ENCODE measurements at regions of chrX and their contacts with region 1.

Region 1: GRCh38 chrX:39730662-39731397 is 366.9 kb downstream of the BCOR start:
- DNase-seq: peak; percentile 70
- H3K4me3 Mint-ChIP-seq: no peak overlapping the region
- H3K27ac Mint-ChIP-seq: no peak overlapping the region
- H3K4me1 Mint-ChIP-seq: peaks cover 20% of the 10 kb centered on the region
- H3K27me3 Mint-ChIP-seq: peaks cover 25% of the 10 kb centered on the region
- CTCF ChIP-seq: peak; percentile 45

Region 2: GRCh38 chrX:39791691-39792090 is 60.9 kb after region 1 on chrX:
- CTCF ChIA-PET with region 1: no interaction called
- POLR2A ChIA-PET with region 1: no interaction called
- intact Hi-C with region 1: no loop called
- DNase-seq: no peak
- H3K4me3 Mint-ChIP-seq: no peak overlapping the region
- H3K27ac Mint-ChIP-seq: no peak overlapping the region
- H3K4me1 Mint-ChIP-seq: no peaks in the 10 kb centered on the region
- H3K27me3 Mint-ChIP-seq: peaks cover 45% of the 10 kb centered on the region
- CTCF ChIP-seq: no peak

Region 3: GRCh38 chrX:39814391-39814790 is 83.6 kb after region 1 on chrX:
- CTCF ChIA-PET with region 1: interaction called, 4 read pairs
- POLR2A ChIA-PET with region 1: interaction called, 4 read pairs
- intact Hi-C with region 1: loop called (anchors 1 kb)
- DNase-seq: peak; percentile 51
- H3K4me3 Mint-ChIP-seq: no peak overlapping the region
- H3K27ac Mint-ChIP-seq: peak overlapping the region; percentile 4
- H3K4me1 Mint-ChIP-seq: peaks cover 15% of the 10 kb centered on the region
- H3K27me3 Mint-ChIP-seq: peaks cover 58% of the 10 kb centered on the region
- CTCF ChIP-seq: peak; percentile 45

Region 4: GRCh38 chrX:39907964-39908616 is 177.3 kb after region 1 on chrX:
- CTCF ChIA-PET with region 1: interaction called, 4 read pairs
- POLR2A ChIA-PET with region 1: no interaction called
- intact Hi-C with region 1: loop called (anchors 10 kb)
- DNase-seq: peak; percentile 90
- H3K4me3 Mint-ChIP-seq: peak overlapping the region; percentile 60
- H3K27ac Mint-ChIP-seq: peak overlapping the region; percentile 10
- H3K4me1 Mint-ChIP-seq: peaks cover 26% of the 10 kb centered on the region
- H3K27me3 Mint-ChIP-seq: peaks cover 57% of the 10 kb centered on the region
- CTCF ChIP-seq: no peak

Region 5: DNA sequence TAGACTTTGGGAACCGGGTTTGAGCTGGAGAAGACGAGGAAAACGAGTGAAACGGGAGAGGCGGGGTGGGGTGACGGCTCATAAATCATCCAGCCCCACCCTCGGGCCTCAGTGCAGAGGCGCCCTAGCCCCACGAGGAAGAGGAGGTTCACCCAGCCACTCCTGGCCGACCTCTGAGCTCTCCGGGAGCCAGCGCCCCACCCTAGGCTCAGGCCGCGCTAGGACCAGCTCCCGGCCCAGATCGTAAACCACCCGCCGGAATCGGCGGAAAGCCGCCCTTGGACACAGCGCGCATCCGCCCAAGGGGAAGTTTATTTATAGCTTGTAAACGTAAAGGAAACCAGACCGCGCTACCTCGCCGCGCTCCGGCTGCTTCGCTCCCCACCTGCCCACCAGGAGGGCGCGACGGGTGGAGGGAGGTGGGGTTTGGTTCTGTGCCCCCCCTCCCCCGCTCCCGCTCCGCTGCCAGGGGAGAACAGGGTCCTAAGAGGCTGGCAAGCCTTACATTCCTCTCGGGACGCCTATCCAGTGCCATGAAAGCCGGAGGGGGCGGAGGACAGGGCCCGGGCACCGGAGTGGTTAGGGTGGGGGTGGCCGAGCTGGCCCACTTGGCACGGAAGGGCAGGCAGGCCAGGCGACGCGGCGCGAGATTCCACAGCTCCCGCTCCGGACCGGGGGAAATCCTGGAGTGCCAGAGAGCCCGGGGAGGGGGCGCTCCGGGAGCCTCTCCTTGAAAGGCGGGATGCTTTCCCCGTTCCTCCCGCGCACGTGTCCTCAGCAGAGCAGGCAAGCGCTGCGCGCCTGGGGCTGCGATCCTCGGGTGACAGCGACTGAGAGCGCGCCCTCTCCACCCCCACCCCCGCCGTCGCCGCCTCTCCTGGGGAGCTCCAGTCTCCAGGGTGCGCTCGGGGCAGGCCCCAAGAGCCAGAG is 282.7 kb after region 1 on chrX:
- CTCF ChIA-PET with region 1: no interaction called
- POLR2A ChIA-PET with region 1: no interaction called
- intact Hi-C with region 1: loop called (anchors 10 kb)
- DNase-seq: peak; percentile 74
- H3K4me3 Mint-ChIP-seq: peak overlapping the region; percentile 79
- H3K27ac Mint-ChIP-seq: peak overlapping the region; percentile 82
- H3K4me1 Mint-ChIP-seq: peaks cover 6% of the 10 kb centered on the region
- H3K27me3 Mint-ChIP-seq: no peaks in the 10 kb centered on the region
- CTCF ChIP-seq: no peak

Region 6: DNA sequence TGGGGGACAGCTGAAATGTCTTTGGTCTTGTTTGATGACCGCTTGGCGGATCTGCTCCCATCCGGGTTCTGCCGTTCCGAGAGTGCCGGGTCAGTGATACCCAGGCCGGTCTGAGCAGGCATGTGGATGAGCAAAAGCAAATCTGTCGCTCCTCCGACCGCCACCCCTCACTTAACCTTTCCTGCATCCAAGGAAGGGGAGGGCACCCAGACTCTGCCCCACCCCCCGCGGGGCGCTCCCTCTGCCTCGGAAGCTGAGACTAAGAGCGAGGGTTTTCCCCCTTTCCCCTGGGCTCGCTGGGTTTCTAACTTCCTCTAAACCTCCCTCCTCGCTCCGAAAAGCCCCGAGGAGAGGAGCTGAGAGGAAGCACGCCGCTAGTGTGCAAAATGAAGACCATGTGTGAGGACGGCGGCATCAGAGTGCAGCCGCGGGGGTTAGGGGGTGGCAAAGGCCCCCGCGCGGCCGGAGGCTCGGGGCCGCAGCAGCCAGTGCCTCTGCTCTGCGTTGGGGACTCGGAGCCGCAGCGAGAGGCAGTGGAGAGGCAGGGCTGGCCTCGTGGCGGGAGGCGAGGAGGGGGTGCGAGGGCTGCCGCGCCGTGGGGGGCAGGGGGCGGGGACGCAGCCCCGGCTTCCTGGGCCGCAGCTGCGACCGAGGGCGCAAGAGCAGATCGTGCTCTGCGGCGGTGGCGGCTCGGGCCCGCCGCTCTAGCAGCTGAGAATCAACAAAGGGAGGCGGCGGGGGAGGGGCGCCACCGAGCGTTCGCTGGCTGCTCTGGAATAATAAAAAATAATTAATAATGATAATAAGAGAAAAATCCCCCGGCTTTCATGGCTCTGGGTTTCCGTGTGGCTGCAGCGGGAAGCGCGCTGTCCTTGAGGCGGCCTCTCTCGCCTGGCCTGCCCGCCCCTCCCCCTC is 422.8 kb after region 1 on chrX:
- CTCF ChIA-PET with region 1: no interaction called
- POLR2A ChIA-PET with region 1: no interaction called
- intact Hi-C with region 1: loop called (anchors 2 kb)
- DNase-seq: peak; percentile 49
- H3K4me3 Mint-ChIP-seq: peak overlapping the region; percentile 62
- H3K27ac Mint-ChIP-seq: no peak overlapping the region
- H3K4me1 Mint-ChIP-seq: no peaks in the 10 kb centered on the region
- H3K27me3 Mint-ChIP-seq: no peaks in the 10 kb centered on the region
- CTCF ChIP-seq: no peak

Region 7: GRCh38 chrX:40266490-40267333 is 535.9 kb after region 1 on chrX:
- CTCF ChIA-PET with region 1: interaction called, 4 read pairs
- POLR2A ChIA-PET with region 1: no interaction called
- intact Hi-C with region 1: loop called (anchors 2 kb)
- DNase-seq: peak; percentile 44
- H3K4me3 Mint-ChIP-seq: peak overlapping the region; percentile 54
- H3K27ac Mint-ChIP-seq: no peak overlapping the region
- H3K4me1 Mint-ChIP-seq: peaks cover 7% of the 10 kb centered on the region
- H3K27me3 Mint-ChIP-seq: peaks cover 11% of the 10 kb centered on the region
- CTCF ChIP-seq: peak; percentile 57

Region 8: DNA sequence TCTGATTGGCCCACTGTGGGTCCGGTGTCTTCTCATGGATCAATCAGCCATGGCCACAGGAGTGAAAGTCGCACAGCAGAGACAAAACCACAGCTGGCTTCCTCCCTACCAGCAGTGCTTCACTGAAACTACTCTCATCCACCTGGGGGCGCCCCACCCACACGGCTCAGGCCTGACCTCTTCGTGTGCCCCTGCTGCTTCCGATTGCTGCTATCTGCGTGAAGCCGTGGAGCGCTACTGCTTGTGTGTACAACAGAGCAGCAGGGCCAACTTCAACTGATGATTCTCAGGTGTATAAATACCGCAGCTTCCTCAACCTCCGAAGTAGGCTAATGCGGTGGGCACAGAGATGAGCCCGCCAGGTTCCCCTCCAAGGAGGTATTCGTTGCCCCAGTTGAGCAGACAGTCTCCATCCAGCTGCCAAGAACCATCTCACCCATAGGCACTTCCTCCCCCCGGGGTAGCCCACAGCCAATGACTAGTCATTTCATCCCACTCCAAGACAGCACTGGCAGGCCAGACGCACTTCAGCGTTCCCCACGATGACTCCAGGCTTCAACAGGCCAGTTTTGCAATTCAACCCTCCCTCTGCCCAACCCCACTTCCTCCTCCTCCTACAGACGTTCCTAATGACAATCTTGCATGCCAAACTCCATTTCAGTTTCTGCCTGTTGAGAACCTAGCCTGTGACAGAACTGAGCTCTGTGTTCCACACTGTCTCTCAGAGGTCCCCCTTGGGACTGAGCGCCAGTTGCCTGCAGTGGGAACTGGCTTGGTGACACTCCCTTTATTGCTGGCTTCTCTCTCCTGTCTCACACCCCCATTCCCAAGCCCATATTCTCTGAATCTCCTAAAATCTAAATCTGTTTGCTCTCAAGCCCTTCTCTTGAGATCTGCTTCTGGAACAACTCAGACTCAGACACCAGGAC is 808.6 kb after region 1 on chrX:
- CTCF ChIA-PET with region 1: interaction called, 12 read pairs
- POLR2A ChIA-PET with region 1: no interaction called
- intact Hi-C with region 1: no loop called
- DNase-seq: peak; percentile 27
- H3K4me3 Mint-ChIP-seq: no peak overlapping the region
- H3K27ac Mint-ChIP-seq: no peak overlapping the region
- H3K4me1 Mint-ChIP-seq: peaks cover 7% of the 10 kb centered on the region
- H3K27me3 Mint-ChIP-seq: peaks cover 86% of the 10 kb centered on the region
- CTCF ChIP-seq: no peak

Measured in MCF 10A (cell line).